Activated naive CD4-positive, alpha-beta T cell treated with anti-CD3 and anti-CD28 coated beads for 36 hours (primary cell): ENCODE measurements at regions of chr11 and their contacts with region 1.

Region 1: DNA sequence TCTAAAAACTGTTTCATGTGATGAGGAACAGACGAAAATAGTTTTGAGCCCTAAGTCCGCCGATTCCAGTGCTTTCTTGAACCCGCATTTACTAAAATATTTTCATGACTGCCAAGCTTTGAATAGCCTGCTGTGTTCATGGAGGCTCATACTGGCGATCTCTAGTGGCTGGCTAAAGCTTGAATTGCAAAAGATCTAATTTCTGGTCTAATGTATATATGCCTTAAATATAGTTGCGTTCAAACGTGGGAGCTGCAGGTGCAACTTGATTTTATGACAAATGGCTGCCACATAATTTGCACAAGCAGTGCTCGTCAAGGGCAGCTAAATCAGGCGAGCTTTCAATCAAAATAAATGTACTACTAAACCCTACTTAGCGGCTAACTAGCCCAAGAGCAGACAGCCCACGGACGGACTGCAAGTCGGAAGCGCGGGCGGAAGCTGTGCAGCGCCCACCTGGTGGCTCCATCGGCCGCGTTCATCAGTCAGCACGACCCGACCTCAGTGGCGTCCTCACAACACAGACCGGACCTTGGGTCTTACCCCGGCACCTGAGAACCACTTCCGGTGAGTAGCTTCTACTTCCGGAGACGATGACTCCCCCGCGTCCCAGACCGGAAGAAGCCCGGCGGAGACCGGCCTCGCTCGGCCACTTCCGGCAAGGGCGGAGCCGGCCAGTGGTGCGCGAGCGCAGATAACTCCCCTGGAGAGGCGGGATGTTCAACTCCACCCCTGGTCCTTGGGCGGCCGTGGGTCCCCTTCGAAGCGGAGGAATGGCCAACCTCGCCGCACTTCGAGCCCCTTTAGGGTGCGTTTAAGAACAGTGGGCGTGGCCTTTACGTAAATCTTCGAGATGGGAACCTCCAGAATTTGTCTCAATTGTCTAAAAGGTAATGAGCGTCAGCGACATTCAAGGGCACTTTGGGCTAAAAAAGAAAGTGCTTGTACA is 6.1 kb downstream of the RPL27A start:
- DNase-seq: peak; percentile 90
- H3K4me3 Mint-ChIP-seq: peak overlapping the region; percentile 97
- H3K27ac Mint-ChIP-seq: peak overlapping the region; percentile 96
- H3K4me1 Mint-ChIP-seq: peaks cover 53% of the 10 kb centered on the region
- H3K27me3 Mint-ChIP-seq: no peaks in the 10 kb centered on the region

Region 2: DNA sequence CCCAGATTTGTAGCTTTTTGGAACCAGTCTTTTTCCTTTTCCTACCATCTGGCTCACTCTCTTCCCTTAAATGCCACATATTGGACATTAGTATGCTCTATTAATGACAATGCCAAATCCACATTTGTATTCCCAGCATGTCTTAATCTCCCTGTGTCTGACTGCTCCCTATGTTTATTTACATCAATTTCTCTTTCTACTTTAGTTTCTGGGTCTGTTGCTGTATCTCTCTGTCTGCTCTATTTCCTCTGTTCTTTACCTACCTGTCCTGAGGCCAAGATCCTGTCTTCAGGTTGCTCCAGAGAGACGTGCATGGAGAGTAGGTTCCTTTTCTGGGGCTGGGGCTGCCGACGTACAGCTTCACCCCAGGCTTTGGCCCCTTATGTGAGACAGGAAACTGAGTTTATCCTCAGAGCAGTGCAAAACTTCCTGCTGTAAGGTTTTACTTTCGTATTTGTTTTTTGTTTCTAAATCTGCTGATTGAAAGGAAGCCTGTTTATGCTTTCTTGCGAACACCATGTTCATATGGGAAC is 1942.5 kb before region 1 on chr11:
- CTCF ChIA-PET with region 1: no interaction called
- intact Hi-C with region 1: loop called (anchors 10 kb)
- DNase-seq: peak; percentile 60
- H3K4me3 Mint-ChIP-seq: no peak overlapping the region
- H3K27ac Mint-ChIP-seq: no peak overlapping the region
- H3K4me1 Mint-ChIP-seq: peaks cover 28% of the 10 kb centered on the region
- H3K27me3 Mint-ChIP-seq: no peaks in the 10 kb centered on the region

Region 3: DNA sequence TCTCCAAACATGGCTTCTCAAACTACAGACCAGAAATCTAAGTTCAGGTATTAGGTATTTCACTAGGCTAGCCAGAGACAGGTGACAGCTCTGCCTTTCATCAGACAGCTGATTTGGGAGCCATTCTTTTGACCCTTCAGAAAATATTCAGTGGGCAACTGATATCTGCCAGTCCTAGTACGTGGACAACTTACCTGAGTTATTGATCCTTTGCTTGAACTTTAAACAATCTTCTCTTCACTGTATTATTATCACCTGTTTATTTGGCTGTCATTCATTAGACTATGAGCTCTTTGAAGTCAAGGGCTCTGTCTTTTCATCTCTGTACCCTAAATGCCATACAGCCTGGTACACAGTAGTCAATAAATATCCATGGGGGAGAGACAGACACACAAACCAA is 23.5 kb before region 1 on chr11:
- CTCF ChIA-PET with region 1: no interaction called
- intact Hi-C with region 1: no loop called
- DNase-seq: no peak
- H3K4me3 Mint-ChIP-seq: no peak overlapping the region
- H3K27ac Mint-ChIP-seq: no peak overlapping the region
- H3K4me1 Mint-ChIP-seq: no peaks in the 10 kb centered on the region
- H3K27me3 Mint-ChIP-seq: no peaks in the 10 kb centered on the region

Region 4: GRCh38 chr11:8832571-8833260 is 144.0 kb after region 1 on chr11:
- CTCF ChIA-PET with region 1: no interaction called
- intact Hi-C with region 1: loop called (anchors 5 kb)
- DNase-seq: peak; percentile 63
- H3K4me3 Mint-ChIP-seq: no peak overlapping the region
- H3K27ac Mint-ChIP-seq: peak overlapping the region; percentile 27
- H3K4me1 Mint-ChIP-seq: peaks cover 8% of the 10 kb centered on the region
- H3K27me3 Mint-ChIP-seq: peaks cover 10% of the 10 kb centered on the region

Region 5: GRCh38 chr11:9363954-9364912 is 675.5 kb after region 1 on chr11:
- CTCF ChIA-PET with region 1: no interaction called
- intact Hi-C with region 1: loop called (anchors 10 kb)
- DNase-seq: peak; percentile 91
- H3K4me3 Mint-ChIP-seq: peak overlapping the region; percentile 66
- H3K27ac Mint-ChIP-seq: peak overlapping the region; percentile 73
- H3K4me1 Mint-ChIP-seq: peaks cover 35% of the 10 kb centered on the region
- H3K27me3 Mint-ChIP-seq: no peaks in the 10 kb centered on the region

Region 6: DNA sequence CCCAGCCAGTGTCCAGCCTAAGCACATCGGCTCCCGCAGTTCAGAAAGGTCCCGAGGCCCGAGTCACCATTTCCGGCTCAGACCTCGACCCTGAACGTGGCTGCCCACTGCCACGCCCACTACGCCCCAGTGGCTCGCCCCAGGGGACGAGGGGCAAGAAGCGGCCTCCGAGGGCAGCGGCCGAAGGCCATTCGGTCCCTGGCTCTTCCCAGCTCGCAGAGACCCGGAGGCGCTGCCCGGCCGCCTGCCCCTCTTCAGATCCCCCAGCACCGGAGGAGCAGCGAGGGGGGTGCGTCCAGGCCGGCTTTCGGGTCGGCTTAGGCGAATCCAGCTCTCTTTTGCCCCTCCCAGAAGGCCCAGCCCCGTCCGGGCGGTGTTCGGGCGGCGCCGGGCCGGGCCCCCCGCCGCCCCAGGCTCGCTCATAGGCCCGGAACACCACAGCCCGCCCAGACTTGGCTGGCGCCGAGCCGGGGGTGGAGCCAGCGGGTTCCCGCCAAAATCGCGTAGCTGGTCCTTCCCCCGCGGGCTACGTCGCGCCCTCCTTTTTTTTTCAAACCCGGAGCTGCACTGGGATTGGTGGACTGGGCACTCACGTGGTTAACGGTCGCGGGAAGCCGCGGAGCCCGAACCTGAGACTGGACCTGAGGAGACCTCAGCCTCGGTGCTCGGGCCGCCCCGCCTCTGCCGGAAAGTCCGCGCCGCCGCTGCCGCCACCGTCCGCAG is 884.5 kb after region 1 on chr11 and contains the start of gene WEE1:
- CTCF ChIA-PET with region 1: no interaction called
- intact Hi-C with region 1: loop called (anchors 5 kb)
- DNase-seq: peak; percentile 99
- H3K4me3 Mint-ChIP-seq: peak within 1 kb of the TSS; percentile 93
- H3K27ac Mint-ChIP-seq: peak within 1 kb of the TSS; percentile 77
- H3K4me1 Mint-ChIP-seq: peaks cover 27% of the 10 kb centered on the region
- H3K27me3 Mint-ChIP-seq: peaks cover 10% of the 10 kb centered on the region
- total RNA-seq, gene WEE1: 41.8 to 46.6 TPM